A549 (cell line): ENCODE measurements at regions of chr2 and their contacts with region 1.

Region 1: GRCh38 chr2:166375736-166376487 is at the start of gene SCN9A:
- DNase-seq: peak; percentile 49 to 92
- ATAC-seq: peak; percentile 90 to 92
- H3K4me3 ChIP-seq: peak within 1 kb of the TSS; percentile 63
- H3K27ac ChIP-seq: peak within 1 kb of the TSS; percentile 84 to 88
- H3K4me1 ChIP-seq: peaks cover 34% of the 10 kb centered on the region
- CTCF ChIP-seq: no peak
- EP300 ChIP-seq: no peak
- POLR2A ChIP-seq: peak; percentile 53; the same call in 1 of the 2 replicates
- RAD21 ChIP-seq: no peak; a peak in 2 of 5 replicates
- polyA plus RNA-seq, gene SCN9A: 19.6 and 23.6 TPM in 2 replicates

Region 2: GRCh38 chr2:166410828-166411472 is 35.0 kb after region 1 on chr2:
- CTCF ChIA-PET with region 1: interaction called, 8 read pairs
- POLR2A ChIA-PET with region 1: interaction called, 22 read pairs
- DNase-seq: peak in 1 of 2 experiments; percentile 62
- ATAC-seq: peak; percentile 98 to 100
- H3K4me3 ChIP-seq: peak overlapping the region; percentile 27; the same call in 1 of the 3 replicates
- H3K27ac ChIP-seq: peak overlapping the region; percentile 78 to 82
- H3K4me1 ChIP-seq: peaks cover 22% of the 10 kb centered on the region
- CTCF ChIP-seq: no peak
- EP300 ChIP-seq: 0 out of 5 replicates have a peak, but pooled peaks of 1 of the 2 experiments have one; percentile 24
- POLR2A ChIP-seq: no peak
- RAD21 ChIP-seq: no peak

Region 3: GRCh38 chr2:166464187-166464586 is 88.3 kb after region 1 on chr2:
- CTCF ChIA-PET with region 1: no interaction called
- POLR2A ChIA-PET with region 1: no interaction called
- DNase-seq: no peak
- ATAC-seq: no peak
- H3K4me3 ChIP-seq: no peak overlapping the region
- H3K27ac ChIP-seq: no peak overlapping the region
- H3K4me1 ChIP-seq: no peaks in the 10 kb centered on the region
- CTCF ChIP-seq: no peak
- EP300 ChIP-seq: no peak
- POLR2A ChIP-seq: no peak
- RAD21 ChIP-seq: no peak